PC-3 (cell line): ENCODE measurements at regions of chr12 and their contacts with region 1.

Region 1: GRCh38 chr12:110403146-110403975 is at the start of gene ANAPC7:
- DNase-seq: peak; percentile 90
- ATAC-seq: peak; percentile 89
- H3K4me3 ChIP-seq: peak within 1 kb of the TSS; percentile 78
- H3K27ac ChIP-seq: peak within 1 kb of the TSS; percentile 88
- H3K4me1 ChIP-seq: peaks cover 12% of the 10 kb centered on the region
- H3K27me3 ChIP-seq: no peaks in the 10 kb centered on the region
- CTCF ChIP-seq: no peak
- total RNA-seq, gene ANAPC7: 80.5 and 112 TPM in 2 replicates

Region 2: DNA sequence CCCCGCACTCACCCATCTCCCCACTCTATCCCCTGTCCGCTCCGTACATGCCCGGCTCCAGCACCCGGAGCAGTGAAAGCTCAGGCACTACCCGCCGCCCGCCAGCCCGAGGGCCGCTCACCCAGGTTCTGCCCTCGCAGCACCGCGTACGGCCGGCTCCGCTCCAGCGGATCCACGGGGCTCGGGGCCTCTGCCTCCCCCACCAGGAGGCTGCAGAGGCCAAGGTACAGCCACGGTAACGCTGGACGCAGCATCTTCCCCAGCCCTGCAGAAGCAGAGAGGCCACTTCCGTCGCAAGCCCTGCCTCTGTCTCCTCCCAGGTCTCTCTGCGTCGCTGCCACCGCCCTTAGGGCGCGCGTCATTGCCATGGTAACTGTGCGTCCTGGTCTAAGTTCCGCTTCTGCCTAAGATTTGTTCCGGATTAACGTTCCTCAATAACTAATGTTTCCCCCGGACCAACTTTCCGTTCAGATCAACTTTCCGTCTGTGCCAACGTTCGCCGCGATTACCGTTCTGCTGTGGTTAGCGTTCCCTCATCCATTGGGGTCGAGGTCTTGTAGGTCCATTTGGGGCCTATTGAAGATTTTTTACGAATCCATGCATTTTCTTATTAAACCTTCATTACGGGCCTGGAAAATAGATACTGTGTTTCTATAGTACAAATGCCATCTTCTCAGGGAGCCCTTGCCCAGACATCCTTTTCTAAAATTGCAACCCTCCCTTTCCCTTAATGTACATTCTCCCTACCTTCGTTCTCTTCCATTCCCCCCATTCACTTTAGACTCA is 354.9 kb before region 1 on chr12 and contains the start of gene C12orf76:
- CTCF ChIA-PET with region 1: no interaction called
- POLR2A ChIA-PET with region 1: no interaction called
- intact Hi-C with region 1: loop called (anchors 5 kb)
- DNase-seq: peak; percentile 99
- ATAC-seq: peak; percentile 100
- H3K4me3 ChIP-seq: peak within 1 kb of the TSS; percentile 87
- H3K27ac ChIP-seq: no peak within 1 kb of the TSS
- H3K4me1 ChIP-seq: peaks cover 17% of the 10 kb centered on the region; the same call in 1 of the 2 replicates
- H3K27me3 ChIP-seq: no peaks in the 10 kb centered on the region
- CTCF ChIP-seq: no peak
- total RNA-seq, gene C12orf76: 5.5 and 6.7 TPM in 2 replicates